GM13976 (cell line): ENCODE measurements at regions of chr1 and their contacts with region 1.

Region 1: DNA sequence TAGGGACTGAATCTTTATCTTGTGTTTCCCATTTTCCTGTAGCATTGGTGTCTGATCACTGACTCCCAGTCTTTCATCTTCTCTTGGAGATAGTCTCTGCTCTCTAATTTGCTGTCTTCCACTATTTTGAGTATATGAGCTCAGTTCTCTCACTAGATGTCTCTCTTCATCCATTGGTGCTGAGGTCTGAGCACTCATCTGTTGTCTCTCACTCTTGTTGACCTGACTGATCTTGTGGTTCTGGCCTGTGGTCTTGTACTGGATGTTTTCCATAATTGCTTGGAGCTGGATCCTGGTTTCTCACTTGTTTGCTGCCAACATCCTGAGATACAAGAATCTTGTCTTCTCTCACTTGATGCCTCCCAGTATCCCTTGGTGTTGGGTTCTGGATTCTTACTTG is 25.1 kb upstream of the S100A11 start:
- DNase-seq: no peak
- CTCF ChIP-seq: no peak

Region 2: GRCh38 chr1:152440635-152441471 is 378.9 kb after region 1 on chr1:
- in situ Hi-C with region 1: loop called (anchors 10 kb)
- DNase-seq: peak; percentile 84
- CTCF ChIP-seq: peak; percentile 90